Posterior vena cava (tissue), 2 donors: ENCODE measurements at regions of chr9 and their contacts with region 1.

Region 1: DNA sequence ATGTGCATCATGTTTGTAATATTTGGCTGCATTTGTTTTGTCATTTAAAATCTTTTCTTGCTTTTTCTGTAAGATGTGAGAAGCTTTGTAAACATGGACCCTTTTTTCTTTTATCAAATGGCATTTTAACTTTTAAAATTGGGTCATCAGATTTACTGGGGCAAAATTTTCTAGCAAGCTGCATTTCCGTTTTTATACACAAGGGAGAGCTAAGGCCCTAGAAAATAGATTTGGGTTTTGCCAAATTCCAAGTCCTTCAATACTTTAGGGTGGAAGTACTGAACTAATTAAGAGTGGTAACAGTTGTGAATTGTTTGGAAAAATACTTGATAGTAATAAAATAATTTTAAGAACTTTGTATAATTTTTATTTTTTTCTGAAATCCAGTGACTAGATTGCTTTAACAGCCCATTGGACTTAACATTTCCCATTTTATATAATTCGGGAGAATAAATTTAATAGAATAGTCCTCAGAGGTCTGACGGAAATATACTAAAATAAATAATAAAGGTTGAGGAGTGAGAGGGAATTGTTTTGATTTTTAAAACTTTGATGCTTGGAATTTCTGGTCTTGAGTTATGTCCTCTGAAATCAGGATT is 117.4 kb downstream of the SMARCA2 start:
- DNase-seq: no peak

Region 2: GRCh38 chr9:2727966-2728613 is 595.5 kb after region 1 on chr9:
- intact Hi-C with region 1: loop called in 1 of 2 experiments (anchors 10 kb)
- DNase-seq: no peak

Region 3: DNA sequence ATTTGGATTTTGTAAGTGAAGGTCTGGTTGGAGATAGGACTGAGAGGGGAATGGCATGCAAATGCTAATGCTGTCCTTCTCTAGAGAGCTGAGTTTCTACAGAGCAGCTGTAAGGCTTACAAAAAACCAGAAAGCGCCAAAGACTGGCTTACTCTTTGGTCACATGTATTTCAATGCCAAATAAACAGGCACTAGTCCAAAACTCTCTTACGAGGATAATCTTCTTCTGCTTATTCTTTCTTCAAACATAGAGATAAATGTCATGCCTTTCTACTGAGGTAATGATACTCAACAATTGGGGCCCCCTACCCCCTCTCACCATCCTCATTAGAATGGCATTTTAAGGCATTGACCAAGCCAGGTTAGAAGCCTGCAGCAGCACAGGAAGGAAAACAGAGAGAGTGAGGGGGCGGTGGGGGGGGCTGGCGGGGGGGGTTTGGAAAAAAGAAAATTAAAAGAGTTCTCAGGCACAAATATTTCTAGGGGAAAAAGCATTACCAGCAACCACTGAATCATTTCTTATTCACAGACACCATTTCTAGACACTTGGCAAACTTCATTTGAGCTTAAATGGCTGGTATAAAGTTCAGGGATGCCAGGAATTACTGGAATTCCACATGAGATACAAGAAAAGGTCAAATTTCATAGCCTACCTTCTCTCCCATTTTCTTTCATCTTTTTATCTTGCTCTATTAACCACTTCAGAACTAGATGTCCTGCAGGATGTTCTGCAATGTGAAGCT is 677.3 kb after region 1 on chr9:
- intact Hi-C with region 1: loop called in 1 of 2 experiments (anchors 5 kb)
- DNase-seq: no peak